Activated T-helper 2 cell treated with anti-CD3 and anti-CD28 coated beads, Interferon-gamma antibody, Interleukin-2, Interleukin-4, amounts not matched to agents 10 μg/mL and 5 μg/mL and 100 μg/mL, durations not matched to agents 14 hours and 24 hours and 36 hours (primary cell): ENCODE measurements at regions of chr1 and their contacts with region 1.

Region 1: DNA sequence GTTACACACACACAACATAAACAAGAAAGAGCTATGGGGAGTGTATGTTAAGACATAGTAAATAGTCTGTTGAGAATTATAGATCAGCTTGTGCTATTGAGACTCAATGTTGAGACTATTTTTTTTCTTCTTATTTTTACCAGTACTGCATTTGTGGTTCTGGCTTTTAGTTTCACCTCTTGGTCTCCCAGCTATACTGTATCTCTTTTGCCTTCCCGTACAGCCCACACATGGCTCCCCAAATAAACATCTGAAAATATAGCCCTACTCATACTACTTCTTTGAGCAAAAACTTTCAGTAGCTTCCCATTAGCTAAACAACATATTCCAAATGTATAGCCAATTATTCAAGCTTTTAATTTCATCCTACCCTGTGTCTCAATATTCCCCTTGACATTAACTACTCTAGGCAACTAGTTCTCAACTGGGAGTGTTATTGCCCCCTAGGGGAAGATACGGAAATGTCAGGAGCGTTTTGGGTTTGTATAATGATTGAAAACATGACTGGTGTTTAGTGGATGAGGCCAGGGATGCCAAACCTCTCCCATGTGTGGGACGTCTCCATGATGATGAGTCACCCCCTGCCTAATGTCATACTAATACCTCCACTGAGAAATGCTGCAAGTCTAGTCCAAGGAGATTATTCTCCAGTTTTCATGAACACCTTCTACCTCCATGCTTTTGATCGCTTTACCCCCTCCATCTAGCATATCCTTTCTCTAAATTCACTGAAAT is 6.8 kb downstream of the RPE65 start:
- DNase-seq: no peak
- H3K4me3 Mint-ChIP-seq: no peak overlapping the region
- H3K27ac Mint-ChIP-seq: no peak overlapping the region
- H3K4me1 Mint-ChIP-seq: peaks cover 2% of the 10 kb centered on the region
- H3K27me3 Mint-ChIP-seq: no peaks in the 10 kb centered on the region

Region 2: DNA sequence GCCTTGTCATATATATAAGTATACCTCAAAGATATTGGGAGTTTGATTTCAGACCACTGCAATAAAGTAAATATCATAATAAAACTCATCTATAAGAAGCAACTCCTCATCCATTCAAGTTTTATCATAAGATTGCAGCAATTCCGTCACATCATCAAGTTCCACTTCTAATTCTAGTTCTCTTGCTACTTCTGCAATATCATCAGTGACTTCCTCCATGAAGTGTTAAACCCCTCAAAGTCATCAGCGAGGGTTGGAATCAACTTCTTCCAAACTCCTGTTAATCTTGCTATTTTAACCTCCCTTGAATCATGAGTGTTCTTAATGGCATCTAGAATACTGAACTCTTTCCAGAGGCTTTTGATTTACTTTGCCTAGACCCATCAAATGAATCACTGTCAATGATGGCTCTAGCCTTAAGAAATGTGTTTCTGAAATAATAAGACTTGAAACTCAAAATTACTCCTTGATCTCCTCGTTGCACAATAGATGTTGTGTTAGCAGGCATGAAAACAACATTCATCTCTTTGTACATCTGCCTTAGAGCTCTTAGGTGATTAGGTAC is 81.6 kb before region 1 on chr1:
- intact Hi-C with region 1: loop called (anchors 10 kb)
- DNase-seq: no peak
- H3K4me3 Mint-ChIP-seq: no peak overlapping the region
- H3K27ac Mint-ChIP-seq: no peak overlapping the region
- H3K4me1 Mint-ChIP-seq: no peaks in the 10 kb centered on the region
- H3K27me3 Mint-ChIP-seq: peaks cover 1% of the 10 kb centered on the region

Region 3: DNA sequence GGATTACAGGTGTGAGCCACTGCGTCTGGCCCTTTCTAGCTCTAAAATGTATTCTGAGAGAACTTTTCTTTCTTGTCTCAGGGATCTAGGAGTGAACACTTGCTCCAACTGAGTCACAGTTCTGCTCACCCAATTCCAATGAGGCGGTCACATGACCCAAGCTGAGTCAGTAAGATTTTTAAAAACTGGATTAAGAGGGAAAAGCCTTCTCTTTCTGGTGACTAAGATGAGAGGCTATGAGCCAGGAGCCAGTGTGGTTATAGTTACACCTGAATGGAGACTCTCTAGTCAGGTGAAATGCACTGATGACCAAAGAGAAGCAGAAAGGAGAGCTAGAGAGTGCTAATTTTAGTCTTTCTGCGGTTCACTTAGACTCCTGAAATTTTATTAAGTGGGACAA is 63.4 kb after region 1 on chr1:
- intact Hi-C with region 1: no loop called
- DNase-seq: no peak
- H3K4me3 Mint-ChIP-seq: no peak overlapping the region
- H3K27ac Mint-ChIP-seq: no peak overlapping the region
- H3K4me1 Mint-ChIP-seq: peaks cover 4% of the 10 kb centered on the region
- H3K27me3 Mint-ChIP-seq: peaks cover 15% of the 10 kb centered on the region